ENCODE measurements at regions of chr4 and their contacts with region 1.

Region 1: GRCh38 chr4:84582302-84583000 is 476 bp upstream of the CDS1 start:
- DNase-seq: peak; percentile 96
- H3K4me3 Mint-ChIP-seq: peak overlapping the region; percentile 86
- H3K27ac Mint-ChIP-seq: peak overlapping the region; percentile 71
- H3K4me1 Mint-ChIP-seq: peaks cover 33% of the 10 kb centered on the region
- H3K27me3 Mint-ChIP-seq: no peaks in the 10 kb centered on the region
- CTCF ChIP-seq: no peak

Region 2: DNA sequence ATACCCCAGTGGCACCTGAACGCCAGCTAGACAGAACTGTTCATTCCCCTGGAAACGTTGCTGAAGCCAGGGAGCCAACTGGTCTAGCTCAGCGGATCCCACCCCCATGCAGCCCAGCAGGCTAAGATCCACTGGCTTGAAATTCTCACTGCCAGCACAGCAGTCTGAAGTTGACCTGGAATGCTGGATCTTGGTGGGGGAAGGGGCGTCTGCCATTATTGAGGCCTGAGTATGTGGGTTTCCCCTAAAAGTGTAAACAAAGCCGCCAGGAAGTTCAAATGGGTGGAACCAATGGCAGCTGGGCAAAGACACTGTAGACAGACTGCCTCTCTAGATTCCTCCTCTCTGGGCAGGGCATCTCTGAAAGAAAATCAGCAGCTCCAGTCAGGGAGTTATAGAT is 296.4 kb before region 1 on chr4:
- CTCF ChIA-PET with region 1: no interaction called
- intact Hi-C with region 1: no loop called
- DNase-seq: no peak
- H3K4me3 Mint-ChIP-seq: no peak overlapping the region
- H3K27ac Mint-ChIP-seq: no peak overlapping the region
- H3K4me1 Mint-ChIP-seq: no peaks in the 10 kb centered on the region
- H3K27me3 Mint-ChIP-seq: peaks cover 34% of the 10 kb centered on the region
- CTCF ChIP-seq: no peak

Region 3: DNA sequence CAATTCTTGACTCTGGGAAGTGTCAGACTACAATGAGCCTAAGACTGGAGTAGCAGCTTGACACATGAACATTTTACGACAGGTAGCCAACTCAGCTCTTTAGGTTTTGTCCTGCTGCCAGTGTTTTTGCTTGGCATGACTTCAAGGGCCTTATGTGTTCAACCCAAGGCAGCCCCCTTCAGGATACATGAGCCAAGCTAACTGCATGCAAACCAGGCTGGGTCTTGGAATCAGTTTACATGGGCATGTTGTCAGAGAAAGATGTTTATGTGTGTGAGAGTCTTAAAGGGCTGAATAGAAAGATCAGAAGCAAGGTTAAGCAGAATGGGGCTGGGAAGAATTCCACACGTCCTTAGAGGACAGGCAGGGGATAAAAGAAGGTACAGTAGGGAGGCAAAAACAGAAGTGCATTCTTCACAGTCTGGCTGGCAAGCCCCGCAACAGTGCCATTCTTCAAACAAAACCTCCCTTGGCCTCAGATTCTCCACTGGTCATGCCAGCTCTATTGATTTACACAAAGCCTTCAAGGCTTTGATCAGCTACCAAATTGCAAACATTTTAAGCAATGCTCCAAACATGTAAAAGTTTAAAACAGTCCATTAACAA is 180.6 kb before region 1 on chr4:
- CTCF ChIA-PET with region 1: no interaction called
- intact Hi-C with region 1: no loop called
- DNase-seq: no peak
- H3K4me3 Mint-ChIP-seq: no peak overlapping the region
- H3K27ac Mint-ChIP-seq: no peak overlapping the region
- H3K4me1 Mint-ChIP-seq: no peaks in the 10 kb centered on the region
- H3K27me3 Mint-ChIP-seq: peaks cover 32% of the 10 kb centered on the region
- CTCF ChIP-seq: no peak

Region 4: GRCh38 chr4:84451546-84451945 is 130.9 kb before region 1 on chr4:
- CTCF ChIA-PET with region 1: no interaction called
- intact Hi-C with region 1: no loop called
- DNase-seq: no peak
- H3K4me3 Mint-ChIP-seq: no peak overlapping the region
- H3K27ac Mint-ChIP-seq: no peak overlapping the region
- H3K4me1 Mint-ChIP-seq: no peaks in the 10 kb centered on the region
- H3K27me3 Mint-ChIP-seq: peaks cover 16% of the 10 kb centered on the region
- CTCF ChIP-seq: peak; percentile 22

Region 5: GRCh38 chr4:84594724-84595123 is 12.3 kb after region 1 on chr4:
- CTCF ChIA-PET with region 1: interaction called, 12 read pairs
- intact Hi-C with region 1: no loop called
- DNase-seq: no peak
- H3K4me3 Mint-ChIP-seq: no peak overlapping the region
- H3K27ac Mint-ChIP-seq: peak overlapping the region; percentile 50
- H3K4me1 Mint-ChIP-seq: peaks cover 23% of the 10 kb centered on the region
- H3K27me3 Mint-ChIP-seq: no peaks in the 10 kb centered on the region
- CTCF ChIP-seq: no peak

Region 6: GRCh38 chr4:84632092-84632491 is 49.6 kb after region 1 on chr4:
- CTCF ChIA-PET with region 1: no interaction called
- intact Hi-C with region 1: loop called (anchors 10 kb)
- DNase-seq: no peak
- H3K4me3 Mint-ChIP-seq: no peak overlapping the region
- H3K27ac Mint-ChIP-seq: no peak overlapping the region
- H3K4me1 Mint-ChIP-seq: no peaks in the 10 kb centered on the region
- H3K27me3 Mint-ChIP-seq: no peaks in the 10 kb centered on the region
- CTCF ChIP-seq: no peak

Region 7: GRCh38 chr4:84691170-84691691 is 108.8 kb after region 1 on chr4:
- CTCF ChIA-PET with region 1: interaction called, 4 read pairs
- intact Hi-C with region 1: loop called (anchors 10 kb)
- DNase-seq: peak; percentile 3
- H3K4me3 Mint-ChIP-seq: no peak overlapping the region
- H3K27ac Mint-ChIP-seq: no peak overlapping the region
- H3K4me1 Mint-ChIP-seq: peaks cover 8% of the 10 kb centered on the region
- H3K27me3 Mint-ChIP-seq: no peaks in the 10 kb centered on the region
- CTCF ChIP-seq: no peak

Region 8: DNA sequence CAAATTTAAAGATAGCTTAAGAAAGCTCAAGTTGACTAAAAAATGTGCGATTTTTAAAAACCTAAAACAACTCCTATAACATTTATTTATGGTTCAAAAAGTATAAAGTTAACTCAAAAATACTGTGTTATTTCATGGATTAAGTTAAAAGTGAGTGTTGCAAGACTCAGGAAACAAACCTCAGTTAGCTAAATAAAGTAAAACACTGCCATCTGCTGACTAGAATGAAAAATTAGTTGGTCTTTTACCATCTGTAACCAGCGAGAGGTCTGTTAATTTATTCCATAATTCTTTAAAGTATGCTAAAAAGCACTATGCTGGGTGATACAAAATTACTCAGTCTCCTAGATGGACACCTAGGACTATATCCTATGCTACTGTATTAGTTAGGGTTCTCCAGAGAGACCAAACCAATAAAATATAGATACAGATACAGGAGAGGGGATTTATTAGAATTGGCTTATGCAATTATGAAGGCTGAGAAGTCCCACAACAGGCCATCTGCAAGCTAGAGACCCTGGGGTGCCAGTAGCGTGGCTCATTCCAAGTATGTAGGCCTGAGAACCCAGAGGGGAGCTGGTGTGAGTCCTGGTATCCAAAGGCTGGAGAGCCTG is 389.0 kb after region 1 on chr4:
- CTCF ChIA-PET with region 1: no interaction called
- intact Hi-C with region 1: loop called (anchors 2 kb)
- DNase-seq: no peak
- H3K4me3 Mint-ChIP-seq: no peak overlapping the region
- H3K27ac Mint-ChIP-seq: no peak overlapping the region
- H3K4me1 Mint-ChIP-seq: peaks cover 8% of the 10 kb centered on the region
- H3K27me3 Mint-ChIP-seq: no peaks in the 10 kb centered on the region
- CTCF ChIP-seq: no peak